Activated naive CD4-positive, alpha-beta T cell treated with anti-CD3 and anti-CD28 coated beads for 36 hours (primary cell): ENCODE measurements at regions of chr19 and their contacts with region 1.

Region 1: GRCh38 chr19:16330368-16330801 is 5.8 kb downstream of the KLF2 start:
- DNase-seq: peak; percentile 97
- H3K4me3 Mint-ChIP-seq: peak overlapping the region; percentile 24
- H3K27ac Mint-ChIP-seq: peak overlapping the region; percentile 72
- H3K4me1 Mint-ChIP-seq: peaks cover 64% of the 10 kb centered on the region
- H3K27me3 Mint-ChIP-seq: peaks cover 14% of the 10 kb centered on the region

Region 2: GRCh38 chr19:15702534-15702930 is 627.9 kb before region 1 on chr19:
- CTCF ChIA-PET with region 1: no interaction called
- intact Hi-C with region 1: no loop called
- DNase-seq: peak; percentile 38
- H3K4me3 Mint-ChIP-seq: no peak overlapping the region
- H3K27ac Mint-ChIP-seq: no peak overlapping the region
- H3K4me1 Mint-ChIP-seq: no peaks in the 10 kb centered on the region
- H3K27me3 Mint-ChIP-seq: peaks cover 29% of the 10 kb centered on the region

Region 3: DNA sequence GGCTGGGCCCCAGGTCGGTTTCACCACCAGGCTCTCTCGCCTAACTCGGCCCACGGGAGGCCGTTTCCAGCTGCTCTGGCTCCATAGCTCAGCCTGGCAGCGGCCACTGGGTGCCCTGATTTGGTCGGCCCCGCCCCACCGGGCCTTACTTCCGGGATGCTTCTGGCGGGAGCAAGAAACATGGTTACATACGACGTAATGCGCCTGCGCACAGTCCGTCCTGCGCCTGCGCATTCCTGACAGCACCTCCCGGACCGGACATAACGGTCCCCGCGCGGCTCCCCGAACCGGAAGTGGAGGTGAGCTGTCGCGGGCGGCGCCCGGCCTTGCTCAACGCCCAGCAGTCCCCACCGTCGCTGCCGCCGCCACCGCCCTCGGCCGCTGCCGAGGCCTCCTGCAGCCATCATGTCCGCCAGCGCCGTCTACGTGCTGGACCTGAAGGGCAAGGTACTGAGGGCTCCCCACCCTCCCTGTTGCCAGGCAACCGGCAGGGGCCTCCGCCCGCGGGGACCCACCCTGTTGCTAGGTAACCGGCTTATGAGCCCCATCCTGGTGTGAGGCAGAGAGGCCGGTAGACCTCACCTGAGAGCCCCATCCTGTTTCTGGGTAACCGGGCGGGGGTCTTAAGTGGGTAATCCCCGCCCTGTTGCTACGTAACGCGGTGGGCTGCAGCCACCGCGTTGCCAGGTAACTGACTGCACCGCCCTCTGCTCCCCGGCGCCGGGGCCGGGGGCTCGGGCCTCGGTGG is 132.6 kb before region 1 on chr19 and contains the start of gene AP1M1:
- CTCF ChIA-PET with region 1: no interaction called
- intact Hi-C with region 1: loop called (anchors 5 kb)
- DNase-seq: peak; percentile 99
- H3K4me3 Mint-ChIP-seq: peak within 1 kb of the TSS; percentile 93
- H3K27ac Mint-ChIP-seq: peak within 1 kb of the TSS; percentile 93
- H3K4me1 Mint-ChIP-seq: peaks cover 37% of the 10 kb centered on the region
- H3K27me3 Mint-ChIP-seq: no peaks in the 10 kb centered on the region
- total RNA-seq, gene AP1M1: 113 to 123 TPM

Region 4: DNA sequence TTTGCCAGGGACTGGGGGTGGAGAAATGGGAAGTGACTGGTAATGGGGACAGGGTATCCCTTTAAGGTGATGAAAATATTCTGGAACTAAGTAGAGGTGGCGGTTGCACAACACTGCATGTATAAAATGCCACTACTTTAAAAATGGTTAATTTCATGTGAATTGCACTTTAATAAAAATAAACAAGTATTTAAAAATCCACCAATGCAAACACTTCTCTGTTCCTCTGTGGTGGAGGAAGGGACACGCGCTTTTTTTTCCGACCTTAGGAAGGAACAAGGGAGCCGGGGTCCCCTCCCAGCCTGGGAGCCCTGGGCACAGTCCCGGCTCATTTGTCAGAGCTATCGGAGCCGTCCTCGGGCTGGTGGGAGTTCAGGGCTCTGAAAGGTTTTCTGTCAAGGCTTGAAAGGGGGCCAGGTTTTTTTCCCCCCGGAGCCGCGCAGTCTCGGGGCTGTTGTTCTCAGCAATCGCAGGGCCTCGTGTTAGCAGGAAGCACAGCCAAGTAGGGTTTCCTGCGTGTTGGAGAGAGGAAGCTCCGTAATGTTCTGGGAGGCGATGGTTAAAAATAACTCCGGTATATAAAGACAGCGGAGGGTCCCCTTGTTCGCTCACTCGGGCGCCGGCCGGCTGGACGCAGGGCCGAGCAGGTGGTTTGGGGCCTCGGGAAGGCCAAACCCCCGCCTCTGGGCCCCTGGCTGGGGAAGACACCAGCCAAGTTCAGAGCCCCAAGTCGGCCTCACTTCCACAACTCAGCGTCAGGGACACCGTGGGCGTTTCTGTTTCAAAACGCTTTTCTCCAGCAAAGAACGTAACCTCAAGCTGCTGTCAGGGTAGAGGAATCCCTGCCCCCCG is 46.9 kb before region 1 on chr19:
- CTCF ChIA-PET with region 1: interaction called, 5 read pairs
- intact Hi-C with region 1: loop called (anchors 2 kb)
- DNase-seq: peak; percentile 92
- H3K4me3 Mint-ChIP-seq: peak overlapping the region; percentile 52
- H3K27ac Mint-ChIP-seq: peak overlapping the region; percentile 66
- H3K4me1 Mint-ChIP-seq: peaks cover 43% of the 10 kb centered on the region
- H3K27me3 Mint-ChIP-seq: peaks cover 7% of the 10 kb centered on the region

Region 5: DNA sequence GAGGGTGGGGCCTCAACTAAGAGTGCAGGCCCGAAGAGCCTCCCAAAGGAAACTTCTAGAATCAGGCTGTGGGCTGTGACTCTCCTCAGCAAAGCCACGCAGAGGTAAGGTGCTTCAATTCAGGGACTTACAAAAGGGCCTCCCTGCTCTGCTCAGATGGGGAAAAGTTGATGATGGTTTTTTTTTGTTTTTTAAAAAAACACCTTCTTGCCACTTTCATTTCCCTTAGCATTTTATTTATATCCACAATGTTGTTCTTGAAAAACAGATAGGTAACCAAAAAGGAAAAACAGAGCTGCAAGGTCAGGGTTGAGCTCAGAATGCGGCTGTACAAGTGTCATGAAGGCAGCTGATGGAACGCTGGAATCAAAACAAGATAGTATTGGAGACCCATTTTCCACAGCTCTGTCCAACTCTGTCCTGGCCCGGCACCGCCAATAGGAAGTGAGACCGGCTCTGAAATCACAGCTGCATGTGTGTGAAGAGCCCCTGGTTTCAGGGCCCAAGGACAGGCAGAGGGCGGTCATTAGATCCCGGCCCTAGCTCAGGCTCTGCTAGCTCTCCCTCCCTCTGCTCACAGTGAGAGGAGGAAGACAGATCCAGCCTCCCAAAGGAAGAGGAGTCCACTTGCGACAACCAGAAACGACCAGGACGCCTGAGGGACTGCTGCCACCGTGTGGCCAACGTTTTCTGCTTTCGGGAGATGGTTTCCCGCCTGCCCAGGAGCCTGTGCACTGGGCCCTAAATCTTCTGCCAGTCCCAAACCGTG is 52.6 kb after region 1 on chr19:
- CTCF ChIA-PET with region 1: interaction called, 12 read pairs
- intact Hi-C with region 1: no loop called
- DNase-seq: peak; percentile 89
- H3K4me3 Mint-ChIP-seq: no peak overlapping the region
- H3K27ac Mint-ChIP-seq: no peak overlapping the region
- H3K4me1 Mint-ChIP-seq: peaks cover 45% of the 10 kb centered on the region
- H3K27me3 Mint-ChIP-seq: no peaks in the 10 kb centered on the region